ENCODE measurements at regions of chr9 and their contacts with region 1.

Region 1: DNA sequence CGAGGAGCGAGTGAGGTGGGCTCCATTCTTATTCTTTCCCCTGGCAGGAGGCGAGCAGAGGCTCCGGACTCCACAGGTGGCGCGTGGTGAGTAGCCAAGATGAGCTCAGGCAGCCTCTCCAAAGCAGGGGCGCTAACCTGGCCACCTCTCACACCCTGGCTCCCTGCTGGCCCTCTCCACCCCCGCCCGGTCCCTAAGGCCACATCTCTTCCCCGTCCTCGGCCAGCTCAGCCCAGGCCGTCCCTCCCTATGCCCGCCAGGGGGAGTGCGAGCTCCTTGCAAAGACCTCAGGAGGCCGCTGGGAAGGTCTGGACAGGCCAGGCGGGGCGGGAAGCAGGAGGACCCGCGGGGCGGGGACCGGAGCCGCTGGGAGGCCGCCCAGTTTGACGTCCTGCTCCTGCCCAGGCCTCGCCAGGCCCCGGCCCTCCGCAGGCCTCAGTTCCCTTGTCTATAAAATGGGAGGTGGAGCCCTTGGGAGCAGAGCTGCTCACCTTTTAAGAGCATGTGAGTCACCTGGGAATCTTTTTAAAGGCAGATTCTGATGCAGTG is 46.3 kb upstream of the GGTA1 start:
- DNase-seq: peak; percentile 88 to 97 (median 94)

Region 2: GRCh38 chr9:121609845-121610570 is 64.1 kb after region 1 on chr9:
- intact Hi-C with region 1: loop called (anchors 10 kb)
- DNase-seq: peak in 28 of 42 donors; percentile 20 to 82 (median 60)

Region 3: GRCh38 chr9:121621113-121621449 is 75.1 kb after region 1 on chr9:
- intact Hi-C with region 1: no loop called
- DNase-seq: peak in 11 of 42 donors; percentile 30 to 77 (median 40)

Region 4: DNA sequence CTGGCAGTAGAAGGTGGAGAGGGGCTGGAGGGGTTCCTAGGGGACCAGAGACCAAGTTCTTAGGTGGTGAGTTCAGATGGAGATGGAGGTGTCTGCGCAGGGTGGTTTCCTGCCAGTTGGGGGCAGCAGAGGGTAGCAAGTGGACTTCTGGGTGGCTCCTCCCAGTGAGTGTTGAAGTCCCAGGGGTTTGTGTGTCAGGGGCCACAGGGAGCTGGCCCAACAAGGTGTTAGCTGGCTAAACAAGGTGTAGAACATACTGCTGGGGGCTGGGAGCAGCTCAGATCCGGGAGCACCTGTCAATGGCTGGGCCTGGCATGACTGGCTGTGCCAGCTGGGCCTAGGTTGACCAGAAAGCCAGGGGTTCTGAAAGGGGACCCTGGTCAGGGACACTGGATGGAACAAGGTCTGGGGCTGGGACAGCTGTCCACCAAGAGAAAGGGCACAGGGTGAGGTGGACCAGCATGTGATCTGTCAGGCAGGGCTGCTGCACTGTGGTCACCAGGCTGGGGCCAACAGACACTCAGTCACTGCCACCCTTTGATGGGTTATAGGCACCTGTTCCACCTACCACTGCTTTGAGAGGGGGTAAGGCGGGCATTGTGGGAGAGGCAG is 141.1 kb after region 1 on chr9:
- intact Hi-C with region 1: loop called (anchors 10 kb)
- DNase-seq: peak in 41 of 42 donors; percentile 72 to 94 (median 86)